Gastrocnemius medialis (tissue), 4 donors: ENCODE measurements at regions of chr2 and their contacts with region 1.

Region 1: GRCh38 chr2:45813003-45813941 is 161.8 kb downstream of the PRKCE start:
- DNase-seq: no peak
- ATAC-seq: peak in 1 of 2 donors; percentile 26
- H3K4me3 ChIP-seq: no peak overlapping the region
- H3K27ac ChIP-seq: peak overlapping the region; percentile 2 to 78 (median 68)
- H3K4me1 ChIP-seq: peaks cover 30 to 38% of the 10 kb centered on the region in 2 donors
- H3K27me3 ChIP-seq: no peaks in the 10 kb centered on the region
- CTCF ChIP-seq: no peak
- POLR2A ChIP-seq: no peak

Region 2: DNA sequence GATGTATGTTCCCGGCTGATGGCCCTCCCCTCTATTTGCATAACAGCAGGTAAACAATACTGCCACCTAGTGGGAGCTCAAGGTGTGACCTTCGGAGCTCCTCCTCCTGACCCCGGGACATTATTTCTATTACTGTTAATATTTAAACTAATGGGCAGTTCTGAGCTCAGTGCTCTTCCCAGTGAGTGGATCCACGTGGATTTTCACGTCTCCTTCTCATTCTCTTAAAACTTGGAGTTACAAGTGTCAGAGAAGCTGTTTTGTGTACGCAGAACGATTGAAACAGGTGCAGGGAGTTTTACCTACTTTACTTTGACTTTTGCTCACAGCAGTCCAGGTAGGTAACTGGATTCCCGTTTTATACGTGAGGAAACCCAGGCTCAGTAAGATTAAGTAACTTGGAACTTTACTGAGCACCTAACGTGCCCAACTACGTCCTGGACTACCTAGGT is 34.5 kb before region 1 on chr2:
- in situ Hi-C with region 1: no loop called
- intact Hi-C with region 1: no loop called
- DNase-seq: peak; percentile 40 to 60
- ATAC-seq: peak; percentile 75 to 85
- H3K4me3 ChIP-seq: no peak overlapping the region
- H3K27ac ChIP-seq: no peak overlapping the region
- H3K4me1 ChIP-seq: peaks cover 10 to 13% of the 10 kb centered on the region in 2 donors
- H3K27me3 ChIP-seq: no peaks in the 10 kb centered on the region
- CTCF ChIP-seq: peak; percentile 81 to 93 (median 85)
- POLR2A ChIP-seq: no peak

Region 3: DNA sequence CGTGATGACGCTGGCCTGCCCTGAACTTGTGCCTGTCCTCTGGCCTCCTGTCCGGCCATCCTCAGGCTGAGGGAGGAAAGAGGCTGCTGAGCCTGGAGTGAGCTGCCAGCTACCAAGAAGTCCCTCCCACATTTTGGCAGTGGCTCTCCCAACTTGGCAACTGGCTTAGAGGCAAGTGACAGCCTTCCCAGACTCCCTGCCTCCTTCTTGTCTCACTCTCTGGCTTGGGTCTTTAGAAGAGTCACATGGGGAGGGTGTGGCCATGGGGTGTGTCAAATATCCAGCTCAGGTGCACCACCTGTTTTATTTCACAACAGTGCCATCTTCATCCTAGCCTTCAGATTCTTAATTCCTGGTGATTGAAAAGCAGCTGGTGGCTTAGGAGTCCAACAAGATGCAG is 61.1 kb after region 1 on chr2:
- in situ Hi-C with region 1: loop called in 1 of 4 experiments (anchors 10 kb)
- intact Hi-C with region 1: no loop called
- DNase-seq: peak; percentile 60 to 89
- ATAC-seq: peak; percentile 83 to 96
- H3K4me3 ChIP-seq: no peak overlapping the region
- H3K27ac ChIP-seq: peak overlapping the region; percentile 34 to 70 (median 46)
- H3K4me1 ChIP-seq: peaks cover 13 to 14% of the 10 kb centered on the region in 2 donors
- H3K27me3 ChIP-seq: no peaks in the 10 kb centered on the region
- CTCF ChIP-seq: no peak
- POLR2A ChIP-seq: no peak